ENCODE measurements at regions of chr12 and their contacts with region 1.

Region 1: DNA sequence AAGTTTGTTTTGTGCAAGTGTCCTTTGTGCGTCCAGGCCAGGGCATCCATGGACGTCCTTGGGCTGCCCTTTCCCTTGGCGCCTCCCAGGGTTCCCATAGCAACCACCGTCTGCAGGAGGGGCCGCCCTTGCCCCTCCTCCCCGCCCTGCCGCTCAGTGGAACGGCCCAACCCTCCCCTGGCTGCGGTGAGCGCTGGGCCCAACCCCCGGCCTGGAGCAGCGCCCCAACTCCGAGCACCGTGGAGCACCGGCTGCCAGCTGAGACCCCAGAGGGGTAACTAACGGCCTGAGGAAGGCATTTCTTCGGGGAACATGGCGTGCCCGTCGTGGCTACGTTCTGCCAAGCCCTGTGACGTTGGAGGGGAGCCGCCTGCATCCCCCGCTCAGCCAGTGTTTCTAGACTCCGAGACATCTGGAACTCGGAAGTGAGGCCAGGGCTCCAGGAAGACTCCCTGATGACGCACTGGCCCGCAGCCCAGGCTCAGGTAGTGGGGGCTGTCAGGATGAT is 5.3 kb upstream of the ACACB start:
- DNase-seq: no peak
- H3K4me3 ChIP-seq: peak overlapping the region; percentile 48
- CTCF ChIP-seq: no peak

Region 2: DNA sequence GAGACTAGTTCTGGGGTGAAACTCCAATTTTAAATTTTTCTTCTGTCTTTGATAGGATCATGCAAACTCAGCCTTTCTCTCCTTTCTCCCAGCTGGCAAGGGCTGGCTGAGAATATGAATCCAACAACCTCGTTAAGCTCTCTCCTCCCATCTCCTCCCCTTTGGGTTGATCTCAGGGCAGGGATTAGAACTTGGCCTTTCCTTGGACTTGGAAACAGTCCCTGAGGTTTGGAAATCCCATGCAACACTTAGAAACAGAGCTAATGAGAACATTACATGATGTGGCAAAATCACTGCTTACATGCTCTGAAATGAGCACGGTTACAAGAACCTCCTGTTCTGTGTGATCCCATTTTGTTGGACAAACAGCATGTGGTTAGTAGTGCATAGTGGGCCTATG is 36.9 kb after region 1 on chr12:
- in situ Hi-C with region 1: no loop called
- DNase-seq: no peak
- H3K4me3 ChIP-seq: no peak overlapping the region
- CTCF ChIP-seq: no peak

Region 3: GRCh38 chr12:109165599-109165998 is 54.6 kb after region 1 on chr12:
- in situ Hi-C with region 1: no loop called
- DNase-seq: no peak
- H3K4me3 ChIP-seq: no peak overlapping the region
- CTCF ChIP-seq: no peak

Region 4: DNA sequence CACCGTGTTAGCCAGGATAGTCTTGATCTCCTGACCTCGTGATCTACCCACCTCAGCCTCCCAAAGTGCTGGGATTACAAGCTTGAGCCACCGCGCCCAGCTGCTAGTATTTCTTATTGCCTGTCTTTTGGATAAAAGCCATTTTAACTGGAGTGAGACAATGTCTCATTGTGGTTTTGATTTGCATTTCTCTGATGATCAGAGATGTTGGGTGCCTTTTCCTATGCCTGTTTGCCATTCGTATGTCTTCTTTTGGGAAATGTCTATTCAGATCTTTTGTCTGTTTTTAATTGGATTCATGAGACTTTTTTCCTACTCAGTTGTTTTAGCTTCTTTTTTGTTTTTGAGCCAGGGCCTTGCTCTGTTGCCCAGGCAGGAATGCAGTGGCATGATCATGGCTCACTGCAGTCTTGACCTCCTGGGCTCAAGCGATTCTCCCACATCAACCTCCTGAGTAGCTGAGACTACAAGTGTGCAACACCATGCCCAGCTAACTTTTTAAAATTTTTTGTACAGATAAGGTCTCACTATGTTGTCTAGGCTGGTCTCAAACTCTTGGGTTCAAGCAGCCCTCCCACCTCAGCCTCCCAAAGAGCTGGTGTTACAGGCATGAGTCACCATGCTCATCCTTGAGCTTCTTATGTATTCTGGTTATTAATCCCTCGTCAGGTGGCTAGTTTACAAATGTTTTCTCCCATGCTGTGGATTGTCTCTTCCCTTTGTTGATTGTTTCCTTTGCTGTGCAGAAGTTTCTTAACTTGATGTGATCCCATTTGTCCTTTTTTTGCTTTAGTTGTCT is 71.2 kb after region 1 on chr12:
- in situ Hi-C with region 1: no loop called
- DNase-seq: no peak
- H3K4me3 ChIP-seq: no peak overlapping the region
- CTCF ChIP-seq: no peak

Region 5: GRCh38 chr12:109393437-109394345 is 282.6 kb after region 1 on chr12:
- in situ Hi-C with region 1: loop called (anchors 25 kb)
- DNase-seq: peak; percentile 27
- H3K4me3 ChIP-seq: no peak overlapping the region
- CTCF ChIP-seq: peak; percentile 99

Region 6: DNA sequence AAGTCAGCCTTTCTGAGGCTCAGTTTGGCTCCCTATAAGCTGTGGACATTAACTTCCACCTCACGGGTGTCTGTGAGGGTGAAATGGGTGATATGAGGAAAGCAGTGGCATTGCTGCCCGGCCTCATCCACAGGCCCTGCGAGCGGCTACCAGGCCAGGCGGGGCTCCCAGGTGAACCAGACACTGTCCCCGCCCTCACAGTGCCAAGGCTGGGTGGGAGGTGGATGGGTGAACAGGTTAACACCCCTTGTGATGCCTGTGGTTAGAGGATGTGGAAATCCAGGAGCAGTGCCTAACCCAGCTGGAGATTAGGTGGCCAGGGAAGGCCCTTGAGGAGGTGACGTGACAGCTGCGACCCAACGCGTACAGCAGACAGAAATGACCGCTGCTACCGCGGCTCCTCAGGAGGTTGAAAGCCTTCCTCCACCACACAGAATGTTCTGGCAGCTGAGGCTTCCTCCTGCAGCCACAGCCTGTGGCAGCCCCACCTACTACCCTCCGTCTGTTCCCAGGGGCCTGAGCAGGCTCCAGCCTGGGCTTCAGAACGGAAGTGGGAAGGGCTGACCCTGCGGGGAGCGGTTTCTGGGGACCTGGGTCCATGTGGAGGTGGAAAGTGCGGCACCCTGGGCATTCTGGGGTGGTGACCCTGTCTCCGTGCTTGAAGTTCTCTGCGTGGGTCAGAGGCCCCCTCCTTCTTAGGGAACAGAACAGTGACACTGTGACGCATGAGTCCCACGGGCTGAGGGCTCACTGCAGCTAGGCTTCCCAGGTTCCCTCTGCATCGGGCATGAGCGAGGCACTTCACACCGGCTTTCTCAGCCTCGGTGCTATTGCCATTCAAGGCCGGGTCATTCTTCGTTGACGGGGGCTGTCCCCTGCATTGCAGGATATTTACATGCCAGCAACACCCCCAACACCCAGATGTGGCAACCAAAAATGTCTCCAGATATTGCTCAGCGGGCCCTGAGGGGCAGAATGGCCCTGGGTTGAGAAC is 452.5 kb after region 1 on chr12:
- in situ Hi-C with region 1: no loop called
- DNase-seq: no peak
- H3K4me3 ChIP-seq: no peak overlapping the region
- CTCF ChIP-seq: no peak